SK-N-SH (cell line): ENCODE measurements at regions of chr1 and their contacts with region 1.

Region 1: GRCh38 chr1:154961497-154962262 is at the start of gene PYGO2:
- DNase-seq: peak; percentile 93
- H3K4me3 ChIP-seq: peak within 1 kb of the TSS; percentile 72 to 73
- H3K27ac ChIP-seq: peak within 1 kb of the TSS; percentile 83 to 98
- H3K4me1 ChIP-seq: peaks cover 4 to 36% of the 10 kb centered on the region in 2 experiments; a peak in 3 of 4 replicates
- H3K27me3 ChIP-seq: no peaks in the 10 kb centered on the region
- CTCF ChIP-seq: peak; percentile 69
- EP300 ChIP-seq: 0 out of 4 replicates have a peak, but pooled peaks of 1 of the 2 experiments have one; percentile 26
- RAD21 ChIP-seq: peak; percentile 46
- polyA plus RNA-seq, gene PYGO2: 23.3 and 28.2 TPM in 2 replicates

Region 2: GRCh38 chr1:154847891-154848290 is 113.8 kb before region 1 on chr1:
- CTCF ChIA-PET with region 1: no interaction called
- POLR2A ChIA-PET with region 1: no interaction called
- DNase-seq: peak; percentile 92
- H3K4me3 ChIP-seq: no peak overlapping the region
- H3K27ac ChIP-seq: peak overlapping the region in 1 of 2 experiments; percentile 29; a peak in 1 of 4 replicates
- H3K4me1 ChIP-seq: peaks cover 7 to 52% of the 10 kb centered on the region in 2 experiments; a peak in 2 of 4 replicates
- H3K27me3 ChIP-seq: no peaks in the 10 kb centered on the region
- CTCF ChIP-seq: no peak
- EP300 ChIP-seq: peak in 1 of 2 experiments; percentile 29; a peak in 1 of 4 replicates
- RAD21 ChIP-seq: peak; percentile 9; the same call in 1 of the 2 replicates

Region 3: DNA sequence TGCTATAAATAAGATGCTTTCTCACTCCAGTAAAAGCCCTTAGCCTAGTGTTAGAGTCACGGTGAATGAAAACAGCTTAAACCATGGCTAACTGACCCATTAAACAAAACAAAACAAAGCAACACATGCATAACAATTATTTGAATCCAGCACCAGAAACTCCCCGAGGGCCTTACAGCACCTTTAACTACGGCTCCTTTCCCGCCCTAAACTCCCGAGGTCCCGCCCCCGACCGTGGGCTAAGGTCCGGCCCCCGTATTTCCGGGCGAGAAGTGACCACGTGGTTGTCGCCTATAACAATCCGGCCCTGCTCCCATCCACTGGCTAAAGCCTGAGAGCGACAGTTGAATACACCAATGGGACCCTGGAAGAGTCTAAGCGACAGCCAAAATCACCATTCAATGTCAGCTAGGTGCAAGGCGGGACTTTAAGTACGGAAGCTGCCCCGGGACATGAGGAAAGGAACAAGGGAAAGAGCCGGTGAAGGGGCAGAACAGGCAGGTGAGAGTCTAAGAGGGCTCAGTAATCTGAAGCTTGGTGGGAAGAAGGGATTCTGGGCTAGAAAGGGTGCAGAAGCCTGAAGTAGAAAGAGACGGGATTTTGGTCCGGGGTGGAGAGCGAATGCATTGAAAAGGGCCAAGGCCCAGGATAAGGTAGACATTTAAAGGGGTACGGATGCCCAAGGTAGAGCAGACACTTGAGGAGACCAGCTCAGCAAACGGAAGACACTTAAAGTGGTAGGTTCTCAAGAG is 21.4 kb after region 1 on chr1 and contains the start of gene FLAD1:
- CTCF ChIA-PET with region 1: interaction called, 12 read pairs
- POLR2A ChIA-PET with region 1: interaction called, 7 read pairs
- DNase-seq: peak; percentile 93
- H3K4me3 ChIP-seq: peak within 1 kb of the TSS; percentile 72 to 82
- H3K27ac ChIP-seq: peak within 1 kb of the TSS; percentile 40 to 78; a peak in 3 of 4 replicates
- H3K4me1 ChIP-seq: peaks cover 4 to 17% of the 10 kb centered on the region in 2 experiments; a peak in 3 of 4 replicates
- H3K27me3 ChIP-seq: no peaks in the 10 kb centered on the region
- CTCF ChIP-seq: no peak
- EP300 ChIP-seq: no peak
- RAD21 ChIP-seq: 0 out of 2 replicates have a peak, but pooled peaks have one; percentile 1
- polyA plus RNA-seq, gene FLAD1: 50.8 and 56.2 TPM in 2 replicates